CD14-positive monocyte (primary cell): ENCODE measurements at regions of chr5 and their contacts with region 1.

Region 1: GRCh38 chr5:138632900-138633489 is 57.8 kb upstream of the HSPA9 start:
- DNase-seq: peak; percentile 80 to 90 (median 83)
- H3K4me3 ChIP-seq: no peak overlapping the region
- H3K4me3 Mint-ChIP-seq: peak overlapping the region in 1 of 2 donors; percentile 26
- H3K27ac ChIP-seq: no peak overlapping the region
- H3K27ac Mint-ChIP-seq: peak overlapping the region in 3 of 7 donors; percentile 5 to 70 (median 59)
- H3K4me1 ChIP-seq: peaks cover 0 to 3% of the 10 kb centered on the region in 2 donors
- H3K4me1 Mint-ChIP-seq: peaks cover 8% of the 10 kb centered on the region
- H3K27me3 ChIP-seq: no peaks in the 10 kb centered on the region
- H3K27me3 Mint-ChIP-seq: peaks cover 0 to 4% (median 4%) of the 10 kb centered on the region in 3 donors
- CTCF ChIP-seq: peak; percentile 61

Region 2: GRCh38 chr5:138583984-138584637 is 48.9 kb before region 1 on chr5:
- intact Hi-C with region 1: loop called in 1 of 2 experiments (anchors 10 kb)
- DNase-seq: no peak
- H3K4me3 ChIP-seq: no peak overlapping the region
- H3K4me3 Mint-ChIP-seq: no peak overlapping the region
- H3K27ac ChIP-seq: no peak overlapping the region
- H3K27ac Mint-ChIP-seq: no peak overlapping the region
- H3K4me1 ChIP-seq: no peaks in the 10 kb centered on the region
- H3K4me1 Mint-ChIP-seq: no peaks in the 10 kb centered on the region
- H3K27me3 ChIP-seq: no peaks in the 10 kb centered on the region
- H3K27me3 Mint-ChIP-seq: peaks cover 0 to 4% (median 0%) of the 10 kb centered on the region in 3 donors
- CTCF ChIP-seq: no peak

Region 3: GRCh38 chr5:138981586-138981985 is 348.6 kb after region 1 on chr5:
- intact Hi-C with region 1: no loop called
- DNase-seq: no peak
- H3K4me3 ChIP-seq: no peak overlapping the region
- H3K4me3 Mint-ChIP-seq: no peak overlapping the region
- H3K27ac ChIP-seq: no peak overlapping the region
- H3K27ac Mint-ChIP-seq: no peak overlapping the region
- H3K4me1 ChIP-seq: no peaks in the 10 kb centered on the region
- H3K4me1 Mint-ChIP-seq: peaks cover 4% of the 10 kb centered on the region
- H3K27me3 ChIP-seq: no peaks in the 10 kb centered on the region
- H3K27me3 Mint-ChIP-seq: peaks cover 0 to 1% (median 1%) of the 10 kb centered on the region in 3 donors
- CTCF ChIP-seq: no peak

Region 4: DNA sequence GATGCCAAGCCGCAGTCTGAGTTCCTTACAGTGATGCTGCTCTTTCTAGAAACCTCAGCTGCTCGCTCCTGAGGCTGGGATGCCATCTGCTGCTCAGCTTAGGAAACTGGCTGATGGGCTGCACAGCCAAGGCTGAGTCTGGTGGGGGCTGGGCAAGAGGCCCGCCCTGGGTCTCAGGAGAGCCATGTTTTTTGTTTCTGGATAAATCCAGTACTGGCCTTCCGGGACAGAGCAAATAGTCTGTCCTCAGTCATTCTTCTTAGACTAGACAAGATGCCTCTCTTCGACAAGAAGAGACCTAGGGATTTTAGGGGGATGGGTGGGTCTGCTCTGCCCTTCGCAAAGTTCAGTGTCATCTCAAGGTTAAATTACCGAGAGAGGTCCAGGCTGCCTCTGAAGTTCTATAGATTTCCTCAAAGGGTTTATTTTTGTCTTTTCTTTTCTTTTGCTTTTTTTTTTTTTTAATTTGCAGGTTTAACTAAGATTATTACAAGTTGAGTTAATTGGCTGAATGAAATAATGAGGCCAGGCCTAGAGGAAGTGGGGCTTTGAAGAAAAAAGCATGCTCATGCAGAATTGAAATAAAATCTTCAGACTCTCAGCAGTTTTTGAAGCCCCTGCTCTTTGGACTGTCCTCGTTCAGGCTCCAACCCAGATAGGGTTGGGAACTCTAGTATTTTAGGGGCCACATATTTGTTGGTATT is 629.9 kb after region 1 on chr5:
- intact Hi-C with region 1: loop called in 1 of 2 experiments (anchors 10 kb)
- DNase-seq: peak; percentile 73 to 84 (median 80)
- H3K4me3 ChIP-seq: no peak overlapping the region
- H3K4me3 Mint-ChIP-seq: no peak overlapping the region
- H3K27ac ChIP-seq: no peak overlapping the region
- H3K27ac Mint-ChIP-seq: no peak overlapping the region
- H3K4me1 ChIP-seq: no peaks in the 10 kb centered on the region
- H3K4me1 Mint-ChIP-seq: peaks cover 3% of the 10 kb centered on the region
- H3K27me3 ChIP-seq: no peaks in the 10 kb centered on the region
- H3K27me3 Mint-ChIP-seq: peaks cover 2 to 6% (median 3%) of the 10 kb centered on the region in 3 donors
- CTCF ChIP-seq: peak; percentile 89